IMR-90 (cell line): ENCODE measurements at regions of chr7 and their contacts with region 1.

Region 1: GRCh38 chr7:75914730-75915585 is at the start of gene POR:
- DNase-seq: peak; percentile 88
- ATAC-seq: peak; percentile 99
- H3K4me3 ChIP-seq: peak within 1 kb of the TSS; percentile 78
- H3K27ac ChIP-seq: peak within 1 kb of the TSS; percentile 86
- H3K4me1 ChIP-seq: peaks cover 2% of the 10 kb centered on the region
- H3K27me3 ChIP-seq: no peaks in the 10 kb centered on the region
- CTCF ChIP-seq: no peak
- POLR2A ChIP-seq: peak; percentile 99
- RAD21 ChIP-seq: peak; percentile 3; the same call in 1 of the 2 replicates
- total RNA-seq, gene POR: 25.3 and 25.5 TPM in 2 replicates

Region 2: DNA sequence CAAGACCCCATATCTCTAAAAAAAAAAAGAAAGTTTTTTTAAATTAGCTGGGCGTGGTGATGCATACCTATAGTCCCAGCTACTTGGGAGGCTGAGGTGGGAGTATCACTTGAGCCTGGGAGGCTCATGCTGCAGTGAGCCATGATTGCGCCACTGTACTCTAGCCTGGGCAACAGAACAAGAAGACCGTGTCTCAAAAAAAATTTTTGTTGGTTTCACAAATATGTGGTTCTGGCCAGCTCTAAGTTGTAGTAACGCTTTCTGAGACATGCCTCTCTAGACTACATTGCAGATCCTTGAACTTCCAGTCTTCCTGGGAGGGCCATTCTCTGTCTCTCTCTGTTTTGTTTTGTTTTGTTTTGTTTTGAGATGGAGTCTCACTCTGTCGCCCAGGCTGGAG is 60.7 kb before region 1 on chr7:
- CTCF ChIA-PET with region 1: no interaction called
- POLR2A ChIA-PET with region 1: no interaction called
- dilution Hi-C with region 1: no loop called
- in situ Hi-C with region 1: no loop called
- intact Hi-C with region 1: no loop called
- DNase-seq: peak; percentile 49
- ATAC-seq: peak; percentile 69
- H3K4me3 ChIP-seq: no peak overlapping the region
- H3K27ac ChIP-seq: no peak overlapping the region
- H3K4me1 ChIP-seq: no peaks in the 10 kb centered on the region
- H3K27me3 ChIP-seq: no peaks in the 10 kb centered on the region
- CTCF ChIP-seq: no peak
- POLR2A ChIP-seq: no peak
- RAD21 ChIP-seq: no peak

Region 3: GRCh38 chr7:75966190-75966961 is 51.4 kb after region 1 on chr7:
- CTCF ChIA-PET with region 1: no interaction called
- POLR2A ChIA-PET with region 1: no interaction called
- dilution Hi-C with region 1: no loop called
- in situ Hi-C with region 1: no loop called
- intact Hi-C with region 1: loop called (anchors 10 kb)
- DNase-seq: no peak
- ATAC-seq: no peak
- H3K4me3 ChIP-seq: no peak overlapping the region
- H3K27ac ChIP-seq: no peak overlapping the region
- H3K4me1 ChIP-seq: peaks cover 15% of the 10 kb centered on the region
- H3K27me3 ChIP-seq: no peaks in the 10 kb centered on the region
- CTCF ChIP-seq: no peak
- POLR2A ChIP-seq: no peak
- RAD21 ChIP-seq: no peak

Region 4: DNA sequence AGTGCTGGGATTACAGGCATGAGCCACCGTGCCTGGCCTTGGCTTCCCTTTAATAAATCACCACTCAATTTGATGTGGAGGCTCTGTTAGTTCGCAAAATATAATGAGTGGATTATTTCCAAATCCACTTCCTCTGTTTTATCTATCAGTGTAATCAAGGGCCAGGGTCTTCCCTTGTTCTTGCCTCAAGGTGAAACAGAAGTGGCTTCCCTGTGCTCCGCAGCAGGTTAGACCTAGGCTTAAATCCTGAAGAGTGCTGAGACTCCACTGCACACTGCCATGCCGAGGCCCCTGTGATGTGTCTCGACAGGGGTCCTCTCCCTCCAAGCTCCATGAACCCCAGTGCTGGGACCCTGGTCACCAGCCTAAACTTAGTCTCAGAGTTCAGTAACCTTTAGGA is 191.9 kb after region 1 on chr7:
- CTCF ChIA-PET with region 1: no interaction called
- POLR2A ChIA-PET with region 1: no interaction called
- dilution Hi-C with region 1: no loop called
- in situ Hi-C with region 1: no loop called
- intact Hi-C with region 1: no loop called
- DNase-seq: no peak
- ATAC-seq: no peak
- H3K4me3 ChIP-seq: no peak overlapping the region
- H3K27ac ChIP-seq: no peak overlapping the region
- H3K4me1 ChIP-seq: peaks cover 1% of the 10 kb centered on the region; the same call in 1 of the 2 replicates
- H3K27me3 ChIP-seq: no peaks in the 10 kb centered on the region
- CTCF ChIP-seq: no peak
- POLR2A ChIP-seq: no peak
- RAD21 ChIP-seq: no peak